Heart right ventricle (tissue), 16 donors: ENCODE measurements at regions of chr4 and their contacts with region 1.

Region 1: GRCh38 chr4:41538017-41538733 is at the start of gene LIMCH1:
- DNase-seq: peak; percentile 64 to 82
- ATAC-seq: peak; percentile 76 to 93 (median 82)
- H3K4me3 ChIP-seq: peak within 1 kb of the TSS in 9 of 10 donors; percentile 6 to 47 (median 39)
- H3K27ac ChIP-seq: peak within 1 kb of the TSS; percentile 44 to 96 (median 88)
- H3K4me1 ChIP-seq: peaks cover 11 to 100% (median 94%) of the 10 kb centered on the region in 9 donors
- H3K27me3 ChIP-seq: no peaks in the 10 kb centered on the region
- CTCF ChIP-seq: no peak
- total RNA-seq, gene LIMCH1: 242 to 410 (median 304) TPM

Region 2: DNA sequence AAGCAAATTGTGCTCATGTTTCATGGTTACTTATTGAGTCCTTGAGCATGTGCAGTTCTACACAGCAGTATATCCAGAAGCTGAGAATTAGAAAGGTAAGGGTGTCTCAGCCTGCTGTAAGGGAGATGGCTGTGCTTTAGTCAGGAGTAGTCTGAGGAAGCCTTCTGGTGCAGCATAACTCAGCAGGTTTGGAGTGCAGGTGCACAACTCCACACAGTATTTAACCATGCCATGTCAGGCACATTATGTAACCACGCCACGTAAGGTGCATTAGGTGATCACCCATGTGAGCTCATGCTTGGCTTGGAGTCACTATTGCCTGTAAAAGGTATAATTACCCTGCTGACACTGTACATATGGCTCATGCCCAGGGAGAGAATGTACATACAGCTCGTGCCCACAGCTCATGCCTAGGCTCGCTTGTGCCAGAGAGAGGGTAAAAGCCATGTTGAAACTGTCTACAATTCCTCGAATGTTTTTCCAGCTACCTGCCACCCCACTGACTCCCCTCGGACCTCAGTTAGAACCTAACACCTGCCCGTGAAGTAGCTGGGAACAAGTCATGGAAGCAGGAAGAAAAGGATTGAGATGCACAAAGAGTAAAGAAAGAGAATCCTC is 243.6 kb before region 1 on chr4:
- intact Hi-C with region 1: loop called in 2 of 10 experiments (anchors 10 kb)
- DNase-seq: no peak
- ATAC-seq: no peak
- H3K4me3 ChIP-seq: no peak overlapping the region
- H3K27ac ChIP-seq: no peak overlapping the region
- H3K4me1 ChIP-seq: peaks cover 0 to 29% (median 0%) of the 10 kb centered on the region in 9 donors
- H3K27me3 ChIP-seq: no peaks in the 10 kb centered on the region
- CTCF ChIP-seq: no peak

Region 3: GRCh38 chr4:41384992-41385391 is 153.2 kb before region 1 on chr4:
- intact Hi-C with region 1: no loop called
- DNase-seq: peak; percentile 83 to 84
- ATAC-seq: peak in 7 of 8 donors; percentile 60 to 88 (median 85)
- H3K4me3 ChIP-seq: no peak overlapping the region
- H3K27ac ChIP-seq: peak overlapping the region in 6 of 10 donors; percentile 0 to 18 (median 11)
- H3K4me1 ChIP-seq: peaks cover 20 to 72% (median 57%) of the 10 kb centered on the region in 9 donors
- H3K27me3 ChIP-seq: no peaks in the 10 kb centered on the region
- CTCF ChIP-seq: no peak

Region 4: DNA sequence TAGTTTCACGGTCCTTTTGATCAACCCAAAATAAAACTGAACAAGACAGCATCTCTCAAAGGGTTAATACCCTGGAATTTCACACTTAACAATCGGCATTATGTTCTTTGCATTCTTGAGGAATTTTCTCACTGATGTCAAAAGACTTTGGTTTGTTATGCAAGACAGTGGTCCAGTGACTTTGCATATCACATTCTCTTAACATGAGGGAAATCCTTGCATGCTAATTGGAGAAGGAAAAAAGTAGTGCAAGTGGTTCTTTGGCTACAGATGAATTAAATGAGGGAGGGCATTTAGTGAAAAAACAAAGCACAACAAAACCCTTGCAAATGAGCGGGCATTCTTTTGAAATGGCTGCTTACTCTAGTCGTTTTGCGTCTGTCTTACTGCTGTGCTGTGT is 105.3 kb before region 1 on chr4:
- intact Hi-C with region 1: loop called in 4 of 10 experiments (anchors 5 to 10 kb)
- DNase-seq: no peak
- ATAC-seq: no peak
- H3K4me3 ChIP-seq: no peak overlapping the region
- H3K27ac ChIP-seq: peak overlapping the region in 5 of 10 donors; percentile 26 to 89 (median 69)
- H3K4me1 ChIP-seq: peaks cover 8 to 95% (median 78%) of the 10 kb centered on the region in 9 donors
- H3K27me3 ChIP-seq: no peaks in the 10 kb centered on the region
- CTCF ChIP-seq: no peak

Region 5: GRCh38 chr4:41611881-41612871 is 74.0 kb after region 1 on chr4:
- intact Hi-C with region 1: loop called in 3 of 10 experiments (anchors 5 kb)
- DNase-seq: peak; percentile 64 to 66
- ATAC-seq: peak; percentile 92 to 96 (median 93)
- H3K4me3 ChIP-seq: peak overlapping the region in 7 of 10 donors; percentile 0 to 39 (median 32)
- H3K27ac ChIP-seq: peak overlapping the region; percentile 19 to 82 (median 68)
- H3K4me1 ChIP-seq: peaks cover 6 to 44% (median 32%) of the 10 kb centered on the region in 9 donors
- H3K27me3 ChIP-seq: no peaks in the 10 kb centered on the region
- CTCF ChIP-seq: peak in 4 of 9 donors; percentile 6 to 37 (median 22)